Posterior vena cava (tissue), 2 donors: ENCODE measurements at regions of chr15 and their contacts with region 1.

Region 1: DNA sequence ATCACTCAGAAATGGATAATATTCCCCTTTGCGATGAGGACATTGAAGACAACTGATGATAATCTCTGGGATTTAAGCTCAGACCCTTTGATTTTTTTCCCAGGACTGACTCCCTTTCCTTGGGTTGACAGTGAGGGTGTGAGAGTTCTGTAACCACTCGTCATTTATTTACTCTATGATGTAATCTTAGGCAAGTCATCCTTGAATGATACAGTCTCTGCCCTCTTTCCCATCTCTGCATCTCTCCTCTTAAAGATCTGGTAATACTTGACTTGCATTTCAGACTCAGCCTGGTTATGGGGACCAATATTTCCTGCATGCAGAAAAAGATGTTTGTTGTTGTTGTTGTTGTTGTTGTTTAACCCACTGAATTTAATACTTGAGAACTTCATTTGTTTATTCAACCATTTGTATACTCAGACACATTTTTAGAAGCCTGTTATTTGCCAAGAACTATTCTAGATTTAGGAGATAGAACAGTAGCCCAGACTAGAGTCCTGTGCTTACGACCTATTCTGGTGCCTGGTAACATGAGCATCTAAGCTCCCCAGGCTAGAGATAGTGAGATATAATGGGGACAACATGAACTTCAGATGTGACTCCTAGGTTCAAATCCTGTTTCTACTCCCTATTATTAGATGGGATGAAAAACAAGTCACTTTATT is 1041.9 kb downstream of the AGBL1 start:
- DNase-seq: no peak

Region 2: DNA sequence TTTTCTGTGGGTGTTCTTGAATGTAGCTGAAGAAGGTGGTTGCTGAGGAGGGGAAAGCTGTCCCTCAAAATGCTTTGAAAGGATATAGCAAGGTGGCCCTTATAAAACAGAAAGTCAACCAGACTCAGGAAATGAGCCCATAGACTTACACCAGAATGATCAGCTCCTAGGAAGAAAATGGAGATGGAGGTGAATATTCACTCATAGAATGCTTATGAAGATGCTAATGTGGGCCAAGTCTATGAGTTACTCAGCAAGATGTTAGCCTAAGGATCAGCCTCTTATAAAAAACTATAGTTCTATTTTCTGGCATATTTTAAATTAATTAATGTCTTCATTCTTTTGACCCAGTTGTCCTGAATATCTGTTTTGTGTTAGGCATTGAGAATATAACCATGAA is 12.2 kb after region 1 on chr15:
- intact Hi-C with region 1: loop called in 1 of 2 experiments (anchors 1 kb)
- DNase-seq: no peak